MCF 10A (cell line): ENCODE measurements at regions of chr12 and their contacts with region 1.

Region 1: GRCh38 chr12:54603173-54603814 is 14.8 kb upstream of the PPP1R1A start:
- DNase-seq: peak; percentile 78
- H3K4me3 Mint-ChIP-seq: no peak overlapping the region
- H3K27ac Mint-ChIP-seq: no peak overlapping the region
- H3K4me1 Mint-ChIP-seq: peaks cover 7% of the 10 kb centered on the region
- H3K27me3 Mint-ChIP-seq: peaks cover 47% of the 10 kb centered on the region
- CTCF ChIP-seq: peak; percentile 73

Region 2: DNA sequence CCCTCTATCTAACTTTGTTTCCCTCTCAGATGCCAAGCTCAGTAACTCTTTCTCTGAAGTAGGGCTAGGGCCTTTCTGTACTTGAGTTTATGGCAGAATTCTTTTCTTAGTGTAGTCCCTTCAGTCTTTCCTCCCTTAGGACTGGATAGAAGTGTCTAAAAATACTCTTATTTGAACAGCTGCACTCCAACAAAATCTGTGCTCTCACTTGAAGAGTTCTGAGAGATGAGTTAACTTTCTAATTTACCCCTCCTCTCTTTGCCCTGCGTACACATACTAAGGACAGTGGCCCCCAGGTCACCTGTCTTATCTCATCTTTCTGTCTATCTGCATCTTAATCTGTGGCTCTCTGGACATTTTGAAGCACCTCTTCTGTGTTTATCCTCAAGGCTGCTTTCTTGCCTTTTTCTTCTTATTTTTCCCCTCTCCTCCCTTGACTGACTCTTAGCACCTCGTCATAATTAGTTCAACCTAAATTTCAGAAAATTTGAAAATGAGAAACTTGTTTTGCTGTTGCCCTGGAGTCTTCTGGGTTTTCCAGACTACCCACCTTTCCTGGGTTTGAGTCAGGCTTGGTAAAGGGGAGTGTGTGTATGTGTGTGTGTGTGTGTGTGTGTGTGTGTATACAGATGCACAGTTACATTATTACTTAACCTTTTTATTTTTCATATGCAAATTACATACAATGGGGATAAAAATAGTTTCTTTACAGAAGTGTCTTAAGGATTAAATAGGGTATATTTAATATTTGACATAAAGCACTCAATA is 81.8 kb before region 1 on chr12:
- CTCF ChIA-PET with region 1: no interaction called
- POLR2A ChIA-PET with region 1: no interaction called
- intact Hi-C with region 1: no loop called
- DNase-seq: no peak
- H3K4me3 Mint-ChIP-seq: no peak overlapping the region
- H3K27ac Mint-ChIP-seq: no peak overlapping the region
- H3K4me1 Mint-ChIP-seq: no peaks in the 10 kb centered on the region
- H3K27me3 Mint-ChIP-seq: peaks cover 75% of the 10 kb centered on the region
- CTCF ChIP-seq: no peak

Region 3: DNA sequence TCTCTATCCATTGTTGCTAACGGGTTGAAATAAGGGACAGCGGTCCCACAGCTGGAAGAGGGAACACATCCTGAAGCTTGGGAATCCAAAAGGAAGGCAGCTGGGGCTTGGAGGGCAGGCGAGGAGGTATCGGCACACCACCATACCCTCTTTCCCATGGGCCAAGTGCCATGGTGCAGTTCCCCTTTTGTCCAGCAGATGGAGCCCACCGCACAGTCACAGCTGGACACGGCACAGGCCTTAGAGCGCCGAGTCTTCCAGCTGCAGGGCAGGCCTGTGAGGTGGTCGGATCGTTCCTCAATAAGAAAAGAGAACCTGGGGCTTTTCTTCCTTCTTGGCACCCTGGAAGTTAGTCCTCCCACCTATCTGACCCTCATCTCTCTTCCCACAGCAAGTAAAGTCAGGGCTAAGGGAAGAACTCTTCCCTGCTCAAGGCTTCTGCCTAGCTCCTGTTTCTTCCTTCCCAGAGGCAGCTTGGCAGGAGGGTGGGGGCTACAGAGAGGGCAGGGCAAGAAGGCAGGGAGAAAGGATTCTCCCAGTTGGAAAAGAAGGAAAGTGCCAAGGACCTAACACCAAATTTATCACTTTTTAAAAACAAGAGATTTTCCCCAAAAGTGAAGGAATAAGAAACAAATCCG is 23.5 kb before region 1 on chr12:
- CTCF ChIA-PET with region 1: interaction called, 229 read pairs
- POLR2A ChIA-PET with region 1: interaction called, 3 read pairs
- intact Hi-C with region 1: no loop called
- DNase-seq: peak; percentile 83
- H3K4me3 Mint-ChIP-seq: no peak overlapping the region
- H3K27ac Mint-ChIP-seq: no peak overlapping the region
- H3K4me1 Mint-ChIP-seq: no peaks in the 10 kb centered on the region
- H3K27me3 Mint-ChIP-seq: peaks cover 62% of the 10 kb centered on the region
- CTCF ChIP-seq: peak; percentile 99

Region 4: DNA sequence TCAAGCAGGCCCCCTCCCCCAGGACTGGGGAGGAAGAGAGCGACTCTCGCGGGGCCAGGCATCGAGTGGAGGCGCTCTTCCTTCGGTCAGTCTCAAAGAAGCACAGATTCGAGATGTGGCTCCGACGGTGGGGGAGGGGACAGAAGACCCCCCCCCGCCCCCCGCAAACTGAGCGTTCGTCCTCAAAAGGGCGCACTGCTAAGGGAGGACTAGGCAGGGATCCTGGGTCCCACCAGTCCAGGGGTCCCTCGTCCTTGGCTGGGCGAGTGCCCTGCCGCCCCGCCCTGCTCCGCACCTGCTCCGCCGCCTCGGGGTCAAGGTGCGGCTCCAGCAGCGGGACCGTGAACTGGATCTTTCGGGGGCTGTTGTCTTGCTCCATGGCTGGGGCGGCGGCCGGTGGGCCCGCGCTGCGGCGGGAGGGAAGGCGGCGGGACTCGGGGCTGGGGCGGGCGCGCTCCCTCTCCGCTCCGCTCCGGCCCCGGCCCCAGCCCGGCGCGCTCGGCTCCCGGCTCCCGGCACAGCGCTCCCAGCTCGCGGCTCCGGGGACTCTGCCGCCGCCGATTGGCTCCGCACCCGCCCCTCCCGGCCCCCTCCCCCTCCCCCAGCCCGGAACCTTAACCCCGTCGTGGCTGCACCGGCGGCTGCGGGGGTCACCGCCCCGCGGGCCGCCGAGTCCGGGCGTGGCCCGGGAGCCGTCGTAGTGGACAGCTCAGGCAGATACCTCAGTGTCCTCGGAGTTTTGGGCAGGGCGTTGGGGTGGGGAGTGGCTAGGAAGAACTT is 15.0 kb before region 1 on chr12 and contains the start of gene PPP1R1A:
- CTCF ChIA-PET with region 1: interaction called, 229 read pairs
- POLR2A ChIA-PET with region 1: no interaction called
- intact Hi-C with region 1: no loop called
- DNase-seq: no peak
- H3K4me3 Mint-ChIP-seq: no peak within 1 kb of the TSS
- H3K27ac Mint-ChIP-seq: no peak within 1 kb of the TSS
- H3K4me1 Mint-ChIP-seq: no peaks in the 10 kb centered on the region
- H3K27me3 Mint-ChIP-seq: peaks cover 70% of the 10 kb centered on the region
- CTCF ChIP-seq: no peak
- total RNA-seq, gene PPP1R1A: not detected in 2 replicates

Region 5: DNA sequence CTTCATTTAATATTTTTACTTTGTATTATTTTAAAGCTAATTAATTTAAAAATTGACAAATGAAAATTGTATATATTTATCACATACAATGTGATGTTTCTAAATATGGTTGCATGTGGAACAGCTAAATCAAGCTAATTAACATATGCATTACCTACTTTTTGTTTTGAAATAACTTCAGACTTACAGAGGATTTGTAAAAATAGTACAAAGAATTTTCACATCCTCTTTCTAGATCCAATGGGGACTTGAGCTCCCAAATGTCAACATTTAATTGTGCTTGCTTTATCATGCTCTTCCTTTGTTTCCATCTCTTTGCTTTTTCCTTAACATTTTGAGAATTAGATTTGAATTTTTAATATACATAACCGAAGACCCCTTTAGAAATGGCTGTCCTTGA is 38.3 kb after region 1 on chr12:
- CTCF ChIA-PET with region 1: interaction called, 3 read pairs
- POLR2A ChIA-PET with region 1: no interaction called
- intact Hi-C with region 1: loop called (anchors 5 kb)
- DNase-seq: no peak
- H3K4me3 Mint-ChIP-seq: no peak overlapping the region
- H3K27ac Mint-ChIP-seq: no peak overlapping the region
- H3K4me1 Mint-ChIP-seq: no peaks in the 10 kb centered on the region
- H3K27me3 Mint-ChIP-seq: peaks cover 47% of the 10 kb centered on the region
- CTCF ChIP-seq: no peak